ENCODE measurements at regions of chr10 and their contacts with region 1.

Region 1: GRCh38 chr10:129023082-129023481 is 444.0 kb upstream of the MGMT start:
- DNase-seq: no peak

Region 2: GRCh38 chr10:128927492-128928161 is 95.5 kb before region 1 on chr10:
- intact Hi-C with region 1: loop called (anchors 10 kb)
- DNase-seq: peak; percentile 65